ENCODE measurements at regions of chr11 and their contacts with region 1.

Region 1: GRCh38 chr11:21501245-21501644 is 691.6 kb upstream of the ANO5 start:
- DNase-seq: no peak
- H3K4me3 ChIP-seq: no peak overlapping the region
- H3K27ac ChIP-seq: no peak overlapping the region; a peak in 1 of 4 replicates
- H3K4me1 ChIP-seq: no peaks in the 10 kb centered on the region
- H3K27me3 ChIP-seq: no peaks in the 10 kb centered on the region
- CTCF ChIP-seq: no peak
- EP300 ChIP-seq: no peak
- RAD21 ChIP-seq: no peak

Region 2: GRCh38 chr11:21511835-21512440 is 10.7 kb after region 1 on chr11:
- CTCF ChIA-PET with region 1: interaction called, 16 read pairs
- POLR2A ChIA-PET with region 1: no interaction called
- DNase-seq: peak; percentile 36
- H3K4me3 ChIP-seq: peak overlapping the region in 1 of 2 experiments; percentile 32; a peak in 1 of 4 replicates
- H3K27ac ChIP-seq: no peak overlapping the region
- H3K4me1 ChIP-seq: peaks cover 0 to 2% of the 10 kb centered on the region in 2 experiments; a peak in 1 of 4 replicates
- H3K27me3 ChIP-seq: no peaks in the 10 kb centered on the region
- CTCF ChIP-seq: peak; percentile 60
- EP300 ChIP-seq: no peak
- RAD21 ChIP-seq: peak; percentile 75